GM10248 (cell line): ENCODE measurements at regions of chr16 and their contacts with region 1.

Region 1: DNA sequence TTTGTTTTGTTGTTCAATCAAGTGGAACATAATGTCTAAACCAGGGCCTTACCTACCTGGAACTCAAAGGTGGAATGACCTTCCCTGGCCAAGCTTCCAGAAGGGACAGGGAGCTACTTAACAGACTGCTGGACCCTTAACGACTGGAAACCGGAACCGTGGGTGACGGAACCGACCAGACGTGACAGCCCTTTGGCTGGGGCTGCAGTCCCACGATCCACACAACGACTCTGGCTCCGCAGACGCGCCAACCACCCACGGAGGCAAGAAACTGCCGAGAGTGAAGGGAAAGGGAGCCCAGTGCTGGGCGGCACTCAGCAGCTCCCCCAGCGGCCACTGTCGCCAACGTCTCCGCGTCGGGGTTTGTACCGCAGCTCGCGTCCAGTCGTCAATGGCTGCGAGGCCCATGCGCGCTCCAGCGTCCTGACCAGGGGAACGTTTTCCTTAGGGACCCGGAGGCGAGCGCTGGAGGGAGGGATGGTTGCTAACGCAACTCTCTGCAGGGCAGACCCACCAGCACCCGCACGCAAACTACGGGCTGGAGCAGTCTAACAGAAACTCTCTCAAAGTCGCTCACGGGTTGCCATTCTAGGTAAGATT is 5.5 kb upstream of the KIF22 start:
- DNase-seq: peak; percentile 79
- CTCF ChIP-seq: peak; percentile 87

Region 2: DNA sequence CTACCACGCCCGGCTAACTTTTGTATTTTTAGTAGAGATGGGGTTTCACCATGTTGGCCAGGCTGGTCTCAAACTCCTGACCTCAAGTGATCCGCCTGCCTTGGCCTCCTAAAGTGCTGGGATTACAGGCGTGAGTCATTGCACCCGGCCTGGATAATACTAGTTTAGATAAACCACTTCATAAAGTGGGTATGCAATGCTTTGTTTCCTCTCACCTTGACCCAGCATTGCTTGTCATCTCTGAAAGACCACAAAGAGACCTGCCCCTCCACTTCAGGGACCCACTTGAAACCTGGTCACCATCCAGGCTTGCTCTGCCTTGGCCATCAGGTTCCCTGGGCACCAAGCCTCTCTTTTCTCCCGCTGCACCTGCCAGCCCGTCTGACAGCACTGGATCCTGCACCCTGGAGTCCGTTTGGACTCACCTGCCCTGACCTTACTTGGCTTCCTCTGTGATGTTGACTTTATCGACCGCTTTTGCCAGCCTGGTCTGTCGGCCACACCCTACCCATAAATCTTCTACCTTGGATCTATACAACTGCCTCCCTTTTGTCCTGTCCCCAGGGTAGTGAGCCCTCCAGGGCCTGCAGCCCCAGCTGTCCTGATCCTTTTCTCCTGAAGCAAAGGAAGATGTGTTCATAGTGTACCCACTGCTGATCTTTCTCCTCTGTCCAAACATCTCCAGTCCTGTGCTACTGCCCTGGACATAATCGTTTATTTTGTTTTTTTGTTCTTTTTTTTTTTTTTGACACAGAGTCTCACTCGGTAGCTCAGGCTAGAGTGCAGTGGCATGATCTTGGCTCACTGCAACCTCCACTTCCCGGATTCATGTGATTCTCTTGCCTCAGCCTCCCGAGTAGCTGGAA is 19.6 kb before region 1 on chr16:
- CTCF ChIA-PET with region 1: interaction called, 18 read pairs
- POLR2A ChIA-PET with region 1: no interaction called
- DNase-seq: no peak
- CTCF ChIP-seq: no peak

Region 3: GRCh38 chr16:29805378-29806098 is 20.5 kb after region 1 on chr16:
- CTCF ChIA-PET with region 1: interaction called, 41 read pairs
- POLR2A ChIA-PET with region 1: interaction called, 4 read pairs
- DNase-seq: peak; percentile 94
- CTCF ChIP-seq: no peak

Region 4: DNA sequence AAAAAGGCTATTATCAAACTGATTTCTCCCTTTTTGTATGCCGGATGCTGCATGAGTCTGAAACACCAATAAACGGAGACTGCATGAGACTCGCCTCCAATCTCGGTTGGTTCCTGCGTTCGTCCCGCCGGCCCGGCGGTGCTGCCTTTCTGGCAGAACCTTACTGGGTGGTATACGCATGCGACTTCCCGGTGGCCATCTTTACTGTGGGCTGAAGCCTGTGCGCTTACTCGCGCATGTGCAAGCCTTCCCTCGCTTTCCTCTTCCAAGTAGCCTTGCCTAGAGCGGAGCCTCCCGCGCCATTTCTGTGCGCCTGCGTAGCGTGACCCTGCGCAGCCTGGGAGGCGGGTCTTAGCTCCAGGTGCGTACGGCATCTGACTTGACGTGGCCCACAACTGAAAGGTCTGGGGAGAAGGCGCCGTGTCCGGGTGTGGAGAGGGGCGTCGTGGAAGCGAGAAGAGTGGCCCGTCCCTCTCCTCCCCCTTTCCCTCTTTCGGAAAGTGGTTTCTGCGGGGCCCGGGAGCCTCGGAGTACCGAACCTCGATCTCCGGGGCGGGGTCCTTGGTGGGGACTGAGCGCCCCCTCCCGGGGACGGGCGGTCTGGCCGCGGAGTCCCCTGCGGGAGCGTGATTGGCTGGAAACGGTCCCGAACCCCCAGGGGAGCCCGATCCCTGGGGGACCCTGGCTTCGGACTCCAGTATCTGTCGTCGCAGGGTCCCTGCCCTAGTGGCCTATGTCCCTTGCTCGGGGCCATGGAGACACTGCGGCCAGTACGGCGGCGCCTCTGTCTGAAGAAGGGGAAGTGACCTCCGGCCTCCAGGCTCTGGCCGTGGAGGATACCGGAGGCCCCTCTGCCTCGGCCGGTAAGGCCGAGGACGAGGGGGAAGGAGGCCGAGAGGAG is 31.0 kb after region 1 on chr16 and contains the start of gene PAGR1:
- CTCF ChIA-PET with region 1: interaction called, 10 read pairs
- POLR2A ChIA-PET with region 1: no interaction called
- DNase-seq: peak; percentile 96
- CTCF ChIP-seq: peak; percentile 97